Activated B cell treated with CpG ODN at 0.5 μM for 24 hours (primary cell): ENCODE measurements at regions of chr13 and their contacts with region 1.

Region 1: DNA sequence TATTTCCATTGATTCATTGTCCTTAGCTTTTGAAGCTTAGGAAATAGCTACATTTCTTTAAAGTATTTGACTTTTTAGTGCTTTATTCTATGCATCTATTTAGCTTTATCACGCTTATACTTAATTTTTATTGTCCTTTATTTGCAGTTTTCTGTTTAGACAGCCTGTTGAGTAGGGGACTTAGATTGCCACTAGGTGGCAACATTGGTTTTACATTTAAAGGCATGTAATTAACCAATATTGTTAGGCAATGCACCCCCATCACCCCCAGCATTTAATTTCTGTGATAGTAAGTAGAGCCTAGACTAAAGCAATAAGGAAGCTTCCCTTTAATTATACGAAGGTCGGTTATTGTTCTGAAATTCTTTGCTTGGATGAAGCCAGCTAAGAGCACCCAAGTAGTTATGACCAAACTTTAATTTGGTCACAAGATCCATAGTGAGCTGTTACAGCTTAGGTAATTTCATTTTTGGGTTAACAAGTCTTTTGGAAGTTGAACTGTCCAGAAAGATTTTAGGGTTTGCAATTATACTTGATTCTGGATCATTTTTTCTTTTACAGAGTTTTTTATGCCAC is 36.5 kb downstream of the B3GLCT start:
- DNase-seq: no peak
- ATAC-seq: no peak
- H3K4me3 Mint-ChIP-seq: no peak overlapping the region
- H3K27ac Mint-ChIP-seq: no peak overlapping the region
- H3K4me1 Mint-ChIP-seq: no peaks in the 10 kb centered on the region
- H3K27me3 Mint-ChIP-seq: no peaks in the 10 kb centered on the region
- CTCF ChIP-seq: no peak

Region 2: DNA sequence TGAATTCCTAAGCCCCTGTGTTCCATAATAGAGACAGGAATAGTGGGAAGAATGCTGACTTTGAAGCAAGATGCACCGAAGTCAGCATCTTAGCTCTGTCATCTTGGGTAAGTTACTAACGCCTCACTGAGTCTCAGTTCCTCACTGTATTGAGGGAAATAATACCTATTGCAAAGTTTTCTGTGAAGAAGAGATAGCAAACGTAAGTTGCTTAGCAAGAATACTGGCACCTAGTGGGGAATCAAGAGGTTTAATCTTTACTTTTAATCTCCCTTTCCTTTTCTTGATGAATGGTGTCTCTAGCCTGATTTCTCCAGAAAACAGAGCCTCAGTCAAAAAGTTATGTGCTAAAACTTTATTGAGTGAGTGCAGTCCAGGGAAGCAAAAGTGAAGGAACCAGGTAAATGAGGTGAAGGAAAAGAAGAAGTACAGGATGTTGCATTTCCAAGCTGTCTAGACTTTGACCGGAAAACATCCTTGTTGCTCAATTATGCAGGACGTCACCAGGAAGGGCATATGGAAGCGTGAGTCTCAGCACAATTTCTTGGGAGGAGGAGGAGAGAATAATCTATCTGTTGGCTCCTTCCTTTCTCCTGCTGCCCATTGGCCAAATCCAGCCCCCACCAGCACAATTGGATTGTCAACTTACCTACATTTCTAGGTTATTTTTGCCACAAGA is 173.5 kb after region 1 on chr13:
- CTCF ChIA-PET with region 1: interaction called, 3 read pairs
- POLR2A ChIA-PET with region 1: no interaction called
- intact Hi-C with region 1: loop called (anchors 5 kb)
- DNase-seq: no peak
- ATAC-seq: peak; percentile 31
- H3K4me3 Mint-ChIP-seq: no peak overlapping the region
- H3K27ac Mint-ChIP-seq: no peak overlapping the region
- H3K4me1 Mint-ChIP-seq: no peaks in the 10 kb centered on the region
- H3K27me3 Mint-ChIP-seq: no peaks in the 10 kb centered on the region
- CTCF ChIP-seq: no peak

Region 3: DNA sequence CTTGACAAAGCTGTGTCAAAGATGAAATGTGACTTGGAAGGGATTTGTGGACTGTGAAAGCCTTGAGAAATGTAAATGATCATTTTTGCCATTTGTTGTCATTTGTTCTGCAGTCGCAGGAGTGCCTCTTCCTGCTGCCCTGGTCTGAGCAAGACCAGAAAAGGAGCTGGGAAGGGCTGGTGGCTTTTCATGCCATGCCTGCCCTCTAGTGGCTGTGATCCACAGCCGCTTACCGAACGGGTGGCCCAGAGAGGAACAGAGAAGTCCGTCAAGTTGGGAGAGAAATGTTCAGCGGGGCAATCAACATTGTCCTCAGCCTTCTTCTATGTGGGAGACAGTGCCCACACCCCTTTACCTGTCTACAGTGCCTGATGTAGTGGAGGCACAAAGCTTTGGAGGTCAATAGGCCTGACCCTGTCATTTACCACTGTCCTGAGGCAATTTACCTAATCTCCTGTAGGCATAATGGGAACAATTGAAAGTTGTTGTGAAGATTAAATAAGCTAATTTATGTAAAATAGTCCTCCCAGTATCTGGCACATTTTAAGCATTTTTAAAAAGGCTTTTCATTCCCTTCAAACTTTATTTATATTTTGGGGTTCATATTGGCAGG is 187.9 kb after region 1 on chr13:
- CTCF ChIA-PET with region 1: interaction called, 37 read pairs
- POLR2A ChIA-PET with region 1: no interaction called
- intact Hi-C with region 1: loop called (anchors 1 kb)
- DNase-seq: peak; percentile 24
- ATAC-seq: peak; percentile 75
- H3K4me3 Mint-ChIP-seq: no peak overlapping the region
- H3K27ac Mint-ChIP-seq: no peak overlapping the region
- H3K4me1 Mint-ChIP-seq: no peaks in the 10 kb centered on the region
- H3K27me3 Mint-ChIP-seq: peaks cover 2% of the 10 kb centered on the region
- CTCF ChIP-seq: no peak

Region 4: GRCh38 chr13:31742097-31742734 is 505.9 kb after region 1 on chr13:
- CTCF ChIA-PET with region 1: interaction called, 4 read pairs
- POLR2A ChIA-PET with region 1: no interaction called
- intact Hi-C with region 1: loop called (anchors 1 kb)
- DNase-seq: peak; percentile 22
- ATAC-seq: peak; percentile 69
- H3K4me3 Mint-ChIP-seq: no peak overlapping the region
- H3K27ac Mint-ChIP-seq: no peak overlapping the region
- H3K4me1 Mint-ChIP-seq: no peaks in the 10 kb centered on the region
- H3K27me3 Mint-ChIP-seq: peaks cover 2% of the 10 kb centered on the region
- CTCF ChIP-seq: peak; percentile 90